ENCODE measurements at regions of chr1 and their contacts with region 1.

Region 1: DNA sequence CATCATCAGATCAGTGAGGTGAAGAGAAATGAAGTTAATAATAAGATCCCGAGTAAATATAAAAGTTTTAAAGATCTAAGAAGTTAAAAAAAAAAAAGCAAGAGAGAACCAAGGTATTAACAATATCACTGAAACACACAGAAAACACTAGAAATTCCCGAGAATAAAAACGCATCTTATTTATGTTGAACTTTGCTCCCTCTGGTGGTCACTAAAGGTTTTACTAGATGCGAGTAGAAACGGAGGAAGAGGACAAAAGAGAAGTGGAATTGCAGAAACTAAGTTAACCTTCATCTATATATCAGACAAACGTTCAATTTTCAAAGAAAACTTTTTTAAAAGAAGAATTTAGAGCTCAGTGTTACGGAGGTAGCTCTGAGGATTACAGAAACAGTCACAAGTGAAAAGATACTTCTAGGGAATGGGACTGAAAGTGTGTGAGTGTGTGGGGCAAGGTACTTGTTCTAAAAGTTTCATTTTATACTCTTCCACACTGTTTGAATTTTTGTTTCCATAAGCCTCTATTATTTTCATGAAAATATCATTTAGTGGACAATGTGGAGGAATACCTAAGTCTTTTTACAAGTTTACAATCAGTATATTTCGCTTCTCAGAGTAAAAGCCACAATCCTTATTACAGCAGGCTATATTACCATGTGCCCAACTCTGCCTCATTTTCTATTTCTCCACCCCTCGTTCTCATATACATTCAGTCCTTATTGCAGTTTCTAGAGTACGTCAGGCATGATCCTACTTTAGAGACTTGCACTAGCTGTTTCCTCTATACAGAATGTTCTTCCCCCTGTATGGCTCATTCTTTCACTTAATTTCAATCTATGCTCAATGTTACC is 19.7 kb downstream of the ACBD6 start:
- H3K4me3 ChIP-seq: no peak overlapping the region
- H3K27ac ChIP-seq: no peak overlapping the region
- H3K4me1 ChIP-seq: no peaks in the 10 kb centered on the region
- CTCF ChIP-seq: peak; percentile 62; the same call in 1 of the 2 replicates

Region 2: GRCh38 chr1:180252638-180253536 is 229.8 kb before region 1 on chr1:
- CTCF ChIA-PET with region 1: interaction called, 19 read pairs
- POLR2A ChIA-PET with region 1: no interaction called
- H3K4me3 ChIP-seq: no peak overlapping the region
- H3K27ac ChIP-seq: no peak overlapping the region
- H3K4me1 ChIP-seq: no peaks in the 10 kb centered on the region
- CTCF ChIP-seq: peak; percentile 82

Region 3: GRCh38 chr1:180468311-180468710 is 14.3 kb before region 1 on chr1:
- CTCF ChIA-PET with region 1: interaction called, 13 read pairs
- POLR2A ChIA-PET with region 1: no interaction called
- H3K4me3 ChIP-seq: no peak overlapping the region
- H3K27ac ChIP-seq: no peak overlapping the region
- H3K4me1 ChIP-seq: peaks cover 10% of the 10 kb centered on the region; the same call in 1 of the 2 replicates
- CTCF ChIP-seq: no peak

Region 4: GRCh38 chr1:180494370-180494769 is 11.7 kb after region 1 on chr1:
- CTCF ChIA-PET with region 1: interaction called, 33 read pairs
- POLR2A ChIA-PET with region 1: no interaction called
- H3K4me3 ChIP-seq: no peak overlapping the region
- H3K27ac ChIP-seq: no peak overlapping the region
- H3K4me1 ChIP-seq: no peaks in the 10 kb centered on the region
- CTCF ChIP-seq: no peak

Region 5: GRCh38 chr1:180502360-180503273 is 20.0 kb after region 1 on chr1 and contains the start of gene ACBD6:
- CTCF ChIA-PET with region 1: interaction called, 10 read pairs
- POLR2A ChIA-PET with region 1: no interaction called
- H3K4me3 ChIP-seq: peak within 1 kb of the TSS; percentile 96
- H3K27ac ChIP-seq: peak within 1 kb of the TSS; percentile 92
- H3K4me1 ChIP-seq: no peaks in the 10 kb centered on the region
- CTCF ChIP-seq: peak; percentile 89

Region 6: DNA sequence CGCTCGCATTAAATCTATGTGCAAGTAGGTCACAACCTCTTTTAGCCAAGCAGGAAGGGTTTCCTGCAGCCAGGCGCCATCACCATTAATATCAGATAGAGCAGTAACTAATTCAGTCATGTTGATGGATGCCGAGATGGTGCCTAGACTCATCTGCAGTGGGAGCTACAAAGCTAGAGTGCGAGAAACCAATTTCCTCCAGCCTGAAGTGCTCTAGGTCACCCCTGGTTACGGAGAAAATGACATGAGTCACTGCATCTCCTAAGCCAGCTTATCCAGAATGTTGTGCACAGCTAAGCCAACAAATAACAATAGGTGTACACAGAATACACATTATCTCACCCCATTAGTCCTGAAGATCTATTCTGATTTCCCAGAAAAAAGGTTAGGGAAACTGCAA is 112.1 kb after region 1 on chr1:
- CTCF ChIA-PET with region 1: no interaction called
- POLR2A ChIA-PET with region 1: no interaction called
- H3K4me3 ChIP-seq: no peak overlapping the region
- H3K27ac ChIP-seq: no peak overlapping the region
- H3K4me1 ChIP-seq: no peaks in the 10 kb centered on the region
- CTCF ChIP-seq: no peak

Measured in HEK293 (cell line).